Tibial artery (tissue), 4 donors: ENCODE measurements at regions of chr10 and their contacts with region 1.

Region 1: DNA sequence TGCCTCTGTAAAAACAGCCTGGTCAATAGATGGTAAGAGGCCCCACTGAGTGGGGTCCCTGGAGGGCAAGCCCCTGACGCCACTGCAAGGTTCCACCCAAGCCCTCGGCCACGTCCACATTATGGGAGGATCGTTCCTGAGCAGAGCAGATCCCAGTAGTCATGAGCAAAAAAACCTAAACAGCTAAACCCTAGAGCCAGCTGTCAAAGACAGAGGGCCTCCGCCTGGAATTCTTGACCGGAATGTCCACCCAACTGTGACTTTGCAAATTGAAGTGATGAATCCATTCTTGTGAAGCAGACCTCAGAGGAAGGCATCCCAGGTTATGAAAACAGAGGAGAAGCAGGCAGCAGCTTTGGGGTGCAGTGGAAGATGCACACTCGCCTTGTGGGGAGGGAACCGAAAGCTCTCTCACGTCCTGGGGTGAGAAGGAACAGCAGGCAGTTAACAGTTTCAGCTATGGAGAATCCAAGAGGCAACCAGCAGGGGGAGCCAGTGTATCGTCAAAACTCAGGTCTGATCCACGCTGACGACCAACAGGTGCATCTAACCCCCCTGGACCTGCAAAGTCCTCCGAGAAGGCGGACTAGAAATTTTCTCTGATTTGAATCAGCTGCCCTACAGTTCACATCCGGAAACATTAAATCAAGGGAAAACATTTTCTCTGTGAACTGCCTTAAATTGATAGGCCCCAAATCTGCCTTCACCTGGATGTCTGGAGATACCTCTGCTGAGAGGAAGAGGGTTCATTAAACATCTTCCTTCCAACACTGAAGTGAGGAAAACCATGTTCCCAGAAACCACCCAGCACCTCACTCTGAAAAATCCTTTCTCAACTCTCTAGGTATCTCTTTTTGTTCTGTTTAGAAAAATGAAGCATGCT is 139.1 kb upstream of the PFKP start:
- DNase-seq: peak; percentile 48 to 78
- H3K4me3 ChIP-seq: no peak overlapping the region
- H3K27ac ChIP-seq: no peak overlapping the region
- H3K4me1 ChIP-seq: peaks cover 0 to 5% (median 0%) of the 10 kb centered on the region in 4 donors
- H3K27me3 ChIP-seq: peaks cover 0 to 40% of the 10 kb centered on the region in 2 donors
- CTCF ChIP-seq: peak; percentile 54 to 63

Region 2: GRCh38 chr10:2968401-2969058 is 40.3 kb after region 1 on chr10:
- intact Hi-C with region 1: no loop called
- DNase-seq: no peak
- H3K4me3 ChIP-seq: no peak overlapping the region
- H3K27ac ChIP-seq: no peak overlapping the region
- H3K4me1 ChIP-seq: no peaks in the 10 kb centered on the region
- H3K27me3 ChIP-seq: peaks cover 0 to 2% of the 10 kb centered on the region in 2 donors
- CTCF ChIP-seq: no peak

Region 3: DNA sequence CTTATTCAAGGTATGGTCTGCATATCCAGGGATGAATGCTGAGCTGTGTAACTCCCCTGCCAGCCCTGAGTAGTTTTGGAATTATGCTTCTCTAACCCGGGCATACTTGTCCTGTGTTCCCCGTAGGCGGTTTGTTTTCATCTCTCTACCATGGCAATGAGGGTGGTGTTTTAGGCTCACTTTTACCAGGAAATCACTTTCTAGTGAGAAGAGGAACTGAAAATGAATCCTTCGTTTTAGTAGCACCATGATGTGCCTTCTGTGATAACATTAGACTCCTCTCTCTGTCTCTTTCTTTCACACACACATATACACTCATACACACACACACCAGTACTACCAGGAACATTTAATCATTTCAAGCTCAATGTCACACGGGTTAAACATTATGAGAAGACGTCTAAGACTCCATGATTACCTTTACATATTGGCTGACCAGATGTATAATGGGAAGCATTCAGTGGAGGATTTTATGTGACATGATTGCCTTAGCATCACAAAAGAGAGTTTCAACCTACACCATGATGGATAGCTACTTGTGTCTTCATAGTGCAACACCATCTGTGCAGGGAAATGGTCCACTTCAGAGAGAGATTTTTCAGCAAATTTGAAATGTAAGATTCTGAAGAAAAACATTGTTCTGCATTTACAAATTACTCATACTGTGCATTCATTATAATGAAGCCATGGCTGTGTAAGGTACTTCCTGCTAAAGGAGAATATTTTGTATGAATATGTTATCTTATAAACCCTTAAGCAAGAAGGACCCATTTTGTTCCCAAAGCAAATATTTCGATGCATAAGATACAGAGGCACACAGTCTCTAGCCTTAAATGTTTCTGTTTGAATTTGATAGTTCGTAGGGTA is 108.2 kb after region 1 on chr10:
- intact Hi-C with region 1: loop called (anchors 10 kb)
- DNase-seq: no peak
- H3K4me3 ChIP-seq: no peak overlapping the region
- H3K27ac ChIP-seq: no peak overlapping the region
- H3K4me1 ChIP-seq: no peaks in the 10 kb centered on the region
- H3K27me3 ChIP-seq: no peaks in the 10 kb centered on the region
- CTCF ChIP-seq: no peak